ENCODE measurements at regions of chr3 and their contacts with region 1.

Region 1: DNA sequence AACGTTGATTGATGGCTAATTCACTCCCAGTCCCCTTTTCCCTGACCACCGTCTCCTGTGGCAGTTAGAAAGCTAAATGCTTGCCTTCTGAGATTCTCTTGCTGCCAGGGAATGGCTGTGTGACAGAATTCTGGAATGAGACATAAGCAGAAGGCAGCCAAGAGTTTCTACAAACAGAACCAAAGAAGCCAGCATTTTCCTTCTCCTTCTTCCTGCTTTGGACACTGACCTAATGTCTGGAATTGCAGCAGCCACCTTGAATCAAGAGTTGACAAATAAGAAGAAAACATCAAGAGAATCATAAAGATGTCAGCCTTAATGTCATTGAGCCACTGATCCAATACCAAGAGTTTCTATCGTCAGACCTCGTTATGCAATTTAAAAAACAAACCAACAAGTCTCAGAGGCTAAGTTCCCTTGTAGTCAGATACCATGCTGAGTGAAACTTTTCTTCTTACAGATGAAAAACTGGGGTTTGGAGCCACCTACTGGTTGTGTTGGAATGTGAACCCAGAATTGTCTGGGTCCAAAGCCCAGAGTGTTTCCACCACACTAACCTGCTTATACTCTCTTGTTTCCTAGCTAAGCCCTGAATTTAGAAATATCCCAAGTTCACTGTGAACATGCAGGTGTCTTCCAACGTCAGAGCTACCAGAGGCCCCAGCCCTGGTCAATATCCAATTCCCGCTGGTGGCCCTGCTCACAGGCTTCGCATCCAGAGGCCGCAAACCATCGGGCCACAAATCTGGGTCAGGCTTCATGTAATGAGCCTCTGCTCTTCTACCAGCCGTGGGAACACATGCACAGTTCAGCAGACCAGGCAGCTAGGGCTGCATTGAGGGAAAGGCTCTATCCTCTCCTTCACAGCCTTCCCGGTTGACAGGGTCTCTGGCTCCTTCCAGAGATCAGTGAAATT is 42.5 kb downstream of the MCF2L2 start:
- DNase-seq: peak; percentile 48 to 69
- H3K4me3 ChIP-seq: no peak overlapping the region
- H3K4me3 Mint-ChIP-seq: no peak overlapping the region
- H3K27ac Mint-ChIP-seq: no peak overlapping the region
- H3K4me1 ChIP-seq: 0 out of 2 replicates have a peak, but pooled peaks cover 3% of the 10 kb centered on the region
- H3K4me1 Mint-ChIP-seq: no peaks in the 10 kb centered on the region
- H3K27me3 ChIP-seq: no peaks in the 10 kb centered on the region
- H3K27me3 Mint-ChIP-seq: no peaks in the 10 kb centered on the region
- CTCF ChIP-seq: peak; percentile 67 to 69

Region 2: GRCh38 chr3:182909318-182910040 is 476.5 kb before region 1 on chr3:
- CTCF ChIA-PET with region 1: no interaction called
- POLR2A ChIA-PET with region 1: no interaction called
- intact Hi-C with region 1: loop called (anchors 5 kb)
- DNase-seq: no peak
- H3K4me3 ChIP-seq: no peak overlapping the region
- H3K4me3 Mint-ChIP-seq: no peak overlapping the region
- H3K27ac Mint-ChIP-seq: no peak overlapping the region
- H3K4me1 ChIP-seq: no peaks in the 10 kb centered on the region
- H3K4me1 Mint-ChIP-seq: no peaks in the 10 kb centered on the region
- H3K27me3 ChIP-seq: no peaks in the 10 kb centered on the region
- H3K27me3 Mint-ChIP-seq: no peaks in the 10 kb centered on the region
- CTCF ChIP-seq: peak; percentile 45 to 57

Region 3: DNA sequence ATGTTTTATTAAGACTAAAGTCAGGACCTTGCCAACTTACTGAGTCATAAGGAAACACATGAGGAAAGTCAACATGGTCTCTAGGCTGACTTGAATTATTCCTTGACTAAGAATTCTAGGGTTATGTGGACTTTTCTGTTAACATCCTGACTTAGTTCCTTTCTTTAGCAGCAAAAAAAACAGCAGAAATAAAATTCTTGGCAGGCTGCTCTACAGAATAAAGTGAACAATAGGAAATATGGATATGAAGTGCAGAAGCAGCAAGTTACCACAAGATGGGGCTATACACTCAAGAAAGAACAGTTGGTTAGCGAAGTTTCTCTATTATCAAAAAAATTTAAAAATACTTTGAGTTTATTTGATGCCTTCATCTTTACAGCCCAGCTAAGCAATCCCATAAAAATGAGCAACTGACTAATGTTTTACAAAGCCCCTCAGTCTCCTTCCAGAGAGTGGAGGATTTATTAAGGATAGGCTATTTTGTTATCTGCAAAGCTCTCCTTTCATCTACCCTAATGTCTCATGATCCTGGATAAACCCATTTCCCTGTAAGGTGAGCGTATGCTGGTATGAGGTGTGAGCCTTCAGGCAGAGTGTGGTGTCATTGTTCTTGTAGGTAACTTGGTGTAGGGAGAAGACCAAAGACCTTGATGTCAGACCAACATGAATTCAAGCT is 263.6 kb before region 1 on chr3:
- CTCF ChIA-PET with region 1: interaction called, 6 read pairs
- POLR2A ChIA-PET with region 1: no interaction called
- intact Hi-C with region 1: loop called (anchors 1 kb)
- DNase-seq: peak in 1 of 2 experiments; percentile 22
- H3K4me3 ChIP-seq: no peak overlapping the region
- H3K4me3 Mint-ChIP-seq: no peak overlapping the region
- H3K27ac Mint-ChIP-seq: no peak overlapping the region
- H3K4me1 ChIP-seq: peaks cover 5% of the 10 kb centered on the region; the same call in 1 of the 2 replicates
- H3K4me1 Mint-ChIP-seq: no peaks in the 10 kb centered on the region
- H3K27me3 ChIP-seq: no peaks in the 10 kb centered on the region
- H3K27me3 Mint-ChIP-seq: peaks cover 2% of the 10 kb centered on the region
- CTCF ChIP-seq: peak; percentile 59 to 78

Region 4: GRCh38 chr3:183178629-183179549 is 207.1 kb before region 1 on chr3:
- CTCF ChIA-PET with region 1: interaction called, 80 read pairs
- POLR2A ChIA-PET with region 1: interaction called, 7 read pairs
- intact Hi-C with region 1: loop called (anchors 1 kb)
- DNase-seq: peak; percentile 55 to 68
- H3K4me3 ChIP-seq: peak overlapping the region; percentile 40
- H3K4me3 Mint-ChIP-seq: peak overlapping the region; percentile 74
- H3K27ac Mint-ChIP-seq: no peak overlapping the region
- H3K4me1 ChIP-seq: no peaks in the 10 kb centered on the region
- H3K4me1 Mint-ChIP-seq: no peaks in the 10 kb centered on the region
- H3K27me3 ChIP-seq: no peaks in the 10 kb centered on the region; the same call in 1 of the 2 replicates
- H3K27me3 Mint-ChIP-seq: peaks cover 7% of the 10 kb centered on the region
- CTCF ChIP-seq: peak in 1 of 2 experiments; percentile 48

Region 5: DNA sequence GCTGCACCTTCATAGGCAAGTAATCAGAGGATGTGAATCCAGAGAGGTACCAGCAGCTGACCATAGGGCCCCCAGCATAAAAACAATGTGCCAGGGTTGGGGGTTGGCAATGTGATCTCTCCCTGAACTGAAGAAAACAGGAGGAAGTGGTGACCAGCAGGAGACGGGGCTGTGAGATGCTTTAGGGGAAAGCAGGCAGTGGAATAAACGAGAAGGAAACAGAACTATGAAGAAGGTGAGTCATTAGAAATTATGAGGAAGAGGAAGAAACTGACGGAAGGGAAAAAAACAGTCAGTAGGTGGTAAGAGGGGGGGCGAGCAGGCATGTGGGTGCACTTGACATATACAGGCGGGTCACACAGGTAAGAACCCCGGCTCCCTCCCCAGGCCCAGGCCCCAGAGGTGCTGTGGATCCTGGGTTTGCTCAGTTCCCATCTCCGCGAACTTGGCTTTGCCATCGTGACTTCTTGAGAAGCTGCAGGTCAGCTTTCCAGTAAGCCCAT is 175.1 kb before region 1 on chr3:
- CTCF ChIA-PET with region 1: no interaction called
- POLR2A ChIA-PET with region 1: no interaction called
- intact Hi-C with region 1: no loop called
- DNase-seq: no peak
- H3K4me3 ChIP-seq: no peak overlapping the region
- H3K4me3 Mint-ChIP-seq: no peak overlapping the region
- H3K27ac Mint-ChIP-seq: no peak overlapping the region
- H3K4me1 ChIP-seq: 0 out of 2 replicates have a peak, but pooled peaks cover 4% of the 10 kb centered on the region
- H3K4me1 Mint-ChIP-seq: peaks cover 5% of the 10 kb centered on the region
- H3K27me3 ChIP-seq: no peaks in the 10 kb centered on the region
- H3K27me3 Mint-ChIP-seq: no peaks in the 10 kb centered on the region
- CTCF ChIP-seq: no peak

Region 6: DNA sequence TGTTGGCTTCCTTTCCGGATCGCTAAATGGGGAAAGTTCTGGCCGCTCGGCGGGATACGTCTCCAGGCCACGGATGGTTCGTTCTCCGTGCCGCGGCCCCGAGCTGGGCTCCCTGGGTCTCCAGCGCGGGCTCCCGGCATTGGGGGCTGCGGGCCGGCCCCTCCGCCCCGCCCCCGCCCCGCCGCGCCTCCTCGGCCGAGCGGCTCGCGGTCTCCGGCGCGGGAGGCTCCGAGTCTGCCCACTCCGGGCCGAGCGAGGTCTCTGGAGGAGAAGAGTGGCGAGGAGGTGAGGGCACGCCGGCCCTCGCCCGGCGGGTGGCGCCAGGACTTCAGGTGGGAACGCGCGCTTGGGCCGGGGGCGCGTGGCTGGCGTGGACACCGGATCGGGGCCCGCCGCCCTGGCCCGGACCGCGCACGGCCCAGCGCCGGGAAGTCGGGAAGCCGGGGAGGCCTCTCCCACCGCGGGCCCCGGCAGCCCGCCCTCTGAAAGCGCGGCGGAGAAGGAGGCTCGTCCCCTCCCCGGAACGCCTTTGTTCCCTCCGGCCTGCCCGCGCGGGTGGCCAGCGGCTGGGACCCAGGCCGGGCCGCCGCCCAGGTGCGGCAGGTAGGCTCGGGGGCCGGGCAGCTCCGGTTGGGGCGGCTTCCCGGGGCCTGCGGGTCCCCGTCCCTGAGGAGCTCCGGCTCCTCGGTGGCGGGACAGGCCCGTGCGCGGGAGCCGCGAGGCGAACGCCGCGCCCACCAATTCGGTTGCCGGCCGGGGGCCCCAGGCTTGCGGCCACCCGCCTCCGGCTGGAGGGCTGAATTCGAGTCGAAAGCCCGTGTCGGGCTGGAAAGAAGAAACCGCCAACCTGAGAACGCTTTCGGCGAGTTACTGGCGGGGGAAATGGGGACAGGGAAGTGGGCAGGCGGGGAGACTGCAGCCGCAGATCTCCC is 131.8 kb before region 1 on chr3:
- CTCF ChIA-PET with region 1: interaction called, 5 read pairs
- POLR2A ChIA-PET with region 1: no interaction called
- intact Hi-C with region 1: loop called (anchors 1 kb)
- DNase-seq: peak; percentile 45 to 67
- H3K4me3 ChIP-seq: peak overlapping the region; percentile 43
- H3K4me3 Mint-ChIP-seq: peak overlapping the region; percentile 82
- H3K27ac Mint-ChIP-seq: peak overlapping the region; percentile 78
- H3K4me1 ChIP-seq: peaks cover 4% of the 10 kb centered on the region; the same call in 1 of the 2 replicates
- H3K4me1 Mint-ChIP-seq: peaks cover 11% of the 10 kb centered on the region
- H3K27me3 ChIP-seq: no peaks in the 10 kb centered on the region
- H3K27me3 Mint-ChIP-seq: no peaks in the 10 kb centered on the region
- CTCF ChIP-seq: no peak